Activated CD8-positive, alpha-beta T cell treated with anti-CD3 and anti-CD28 coated beads, Interleukin-2, amount 10 ng/mL, durations not matched to agents 7 days and 5 days (primary cell): ENCODE measurements at regions of chr3 and their contacts with region 1.

Region 1: DNA sequence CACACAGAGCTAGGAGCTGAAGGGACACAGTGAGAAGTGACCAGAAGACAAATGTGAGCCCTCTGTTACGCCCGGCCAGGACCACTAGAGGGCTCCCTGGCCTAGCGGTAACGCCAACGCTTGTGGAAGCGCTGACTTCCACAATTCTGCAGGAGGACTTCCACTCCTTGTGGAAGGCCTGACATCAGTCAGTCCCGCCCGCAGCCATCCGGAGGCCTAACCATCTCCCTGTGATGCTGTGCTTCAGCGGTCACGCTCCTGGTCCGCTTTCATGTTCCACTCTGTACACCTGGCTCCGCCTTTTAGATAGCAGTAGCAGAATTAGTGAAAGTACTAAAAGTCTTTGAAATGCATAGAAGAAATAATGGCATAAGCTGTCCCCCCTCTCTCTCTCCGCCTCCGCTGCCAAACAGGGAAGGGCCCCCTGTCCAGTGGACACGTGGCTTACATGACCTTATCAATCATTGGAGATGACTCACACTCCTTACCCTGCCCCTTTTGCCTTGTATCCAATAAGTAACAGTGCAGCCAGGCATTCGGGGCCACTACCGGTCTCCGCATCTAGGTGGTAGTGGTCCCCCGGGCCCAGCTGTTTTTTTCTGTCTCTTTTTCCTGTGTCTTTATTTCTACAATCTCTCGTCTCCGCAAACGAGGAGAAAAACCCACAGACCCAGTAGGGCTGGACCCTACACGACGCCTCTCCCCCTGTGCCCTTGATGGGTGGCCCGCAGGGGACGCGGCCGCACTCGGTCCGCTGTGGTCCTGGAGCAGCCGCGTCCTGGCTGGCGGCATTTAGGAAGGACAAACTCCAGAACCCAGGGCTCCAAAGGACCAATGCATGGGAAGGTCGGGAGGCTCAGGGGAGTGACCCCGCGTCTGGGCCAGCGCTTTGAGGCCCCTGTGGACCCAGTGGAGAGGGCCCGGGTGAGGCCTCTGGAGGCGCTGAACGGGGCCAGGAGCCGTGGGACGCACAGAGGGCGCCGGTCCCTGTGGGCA is 27.0 kb upstream of the RPL32 start:
- DNase-seq: peak; percentile 65
- ATAC-seq: peak; percentile 81
- H3K4me3 Mint-ChIP-seq: peak overlapping the region; percentile 50
- H3K27ac Mint-ChIP-seq: no peak overlapping the region
- H3K4me1 Mint-ChIP-seq: peaks cover 22% of the 10 kb centered on the region
- H3K27me3 Mint-ChIP-seq: peaks cover 26% of the 10 kb centered on the region

Region 2: GRCh38 chr3:12886106-12886679 is 17.9 kb after region 1 on chr3:
- CTCF ChIA-PET with region 1: interaction called, 17 read pairs
- POLR2A ChIA-PET with region 1: no interaction called
- DNase-seq: peak; percentile 35
- ATAC-seq: peak; percentile 63
- H3K4me3 Mint-ChIP-seq: peak overlapping the region; percentile 10
- H3K27ac Mint-ChIP-seq: peak overlapping the region; percentile 4
- H3K4me1 Mint-ChIP-seq: peaks cover 13% of the 10 kb centered on the region
- H3K27me3 Mint-ChIP-seq: peaks cover 31% of the 10 kb centered on the region

Region 3: GRCh38 chr3:12891985-12892839 is 23.9 kb after region 1 on chr3:
- CTCF ChIA-PET with region 1: interaction called, 17 read pairs
- POLR2A ChIA-PET with region 1: no interaction called
- DNase-seq: peak; percentile 57
- ATAC-seq: peak; percentile 37
- H3K4me3 Mint-ChIP-seq: no peak overlapping the region
- H3K27ac Mint-ChIP-seq: no peak overlapping the region
- H3K4me1 Mint-ChIP-seq: peaks cover 3% of the 10 kb centered on the region
- H3K27me3 Mint-ChIP-seq: peaks cover 27% of the 10 kb centered on the region